PC-9 (cell line): ENCODE measurements at regions of chr7 and their contacts with region 1.

Region 1: GRCh38 chr7:24531255-24531654 is 42.0 kb upstream of the PALS2 start:
- DNase-seq: no peak
- H3K4me3 ChIP-seq: no peak overlapping the region
- H3K27ac ChIP-seq: no peak overlapping the region
- H3K4me1 ChIP-seq: no peaks in the 10 kb centered on the region
- H3K27me3 ChIP-seq: no peaks in the 10 kb centered on the region
- CTCF ChIP-seq: no peak

Region 2: GRCh38 chr7:22712999-22713398 is 1818.3 kb before region 1 on chr7:
- CTCF ChIA-PET with region 1: interaction called, 17 read pairs
- POLR2A ChIA-PET with region 1: no interaction called
- intact Hi-C with region 1: no loop called
- DNase-seq: peak in 1 of 2 experiments; percentile 13
- H3K4me3 ChIP-seq: no peak overlapping the region
- H3K27ac ChIP-seq: no peak overlapping the region
- H3K4me1 ChIP-seq: peaks cover 8% of the 10 kb centered on the region
- H3K27me3 ChIP-seq: no peaks in the 10 kb centered on the region
- CTCF ChIP-seq: no peak

Region 3: DNA sequence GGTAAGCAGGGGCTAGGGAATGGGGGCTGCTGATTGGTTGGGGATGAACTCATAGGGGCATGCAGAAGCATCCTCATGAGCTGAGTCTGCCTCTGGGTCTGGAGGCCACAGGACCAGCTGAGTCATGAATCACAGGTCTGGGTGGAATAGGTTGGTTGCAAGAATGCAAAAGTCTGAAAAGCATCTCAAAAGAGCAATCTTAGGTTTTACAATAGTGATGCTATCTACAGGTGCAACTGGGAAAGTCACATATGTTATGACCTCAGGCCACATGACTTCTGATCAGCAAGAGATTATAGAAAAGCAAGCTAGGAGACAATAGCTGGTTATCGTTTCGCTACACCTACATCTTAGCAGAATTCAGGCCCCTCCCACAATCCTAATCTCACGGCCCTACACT is 15.3 kb before region 1 on chr7:
- CTCF ChIA-PET with region 1: no interaction called
- POLR2A ChIA-PET with region 1: no interaction called
- intact Hi-C with region 1: no loop called
- DNase-seq: no peak
- H3K4me3 ChIP-seq: no peak overlapping the region
- H3K27ac ChIP-seq: no peak overlapping the region
- H3K4me1 ChIP-seq: no peaks in the 10 kb centered on the region
- H3K27me3 ChIP-seq: peaks cover 14% of the 10 kb centered on the region; the same call in 1 of the 2 replicates
- CTCF ChIP-seq: no peak